Activated CD4-positive, alpha-beta T cell treated with anti-CD3 and anti-CD28 coated beads, Interleukin-2, amount 10 ng/mL, durations not matched to agents 24 days and 14 days (primary cell): ENCODE measurements at regions of chr2 and their contacts with region 1.

Region 1: GRCh38 chr2:197889041-197889440 is 84.6 kb downstream of the PLCL1 start:
- DNase-seq: peak; percentile 84
- H3K4me3 Mint-ChIP-seq: peak overlapping the region; percentile 64
- H3K27ac Mint-ChIP-seq: peak overlapping the region; percentile 76
- H3K4me1 Mint-ChIP-seq: peaks cover 41% of the 10 kb centered on the region
- H3K27me3 Mint-ChIP-seq: no peaks in the 10 kb centered on the region

Region 2: DNA sequence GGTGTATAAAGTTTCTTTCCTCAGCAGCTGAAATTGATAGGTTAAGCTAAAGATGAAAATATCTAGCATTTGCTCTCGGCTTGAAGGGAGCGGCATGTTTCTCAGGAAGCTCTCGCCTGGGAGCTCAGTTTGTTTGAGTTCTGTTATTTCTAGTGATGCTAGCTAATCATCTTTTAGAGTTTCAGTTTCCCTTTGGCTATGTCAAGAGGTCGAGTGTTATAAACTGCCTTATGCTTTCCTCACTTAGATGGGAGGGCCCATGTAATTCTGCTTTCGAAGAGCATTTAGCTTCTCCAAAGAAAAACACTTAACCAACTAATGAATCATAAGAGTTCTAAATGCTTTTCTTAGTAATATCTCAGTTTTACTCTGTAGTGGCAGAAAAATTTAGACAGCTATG is 51.0 kb before region 1 on chr2:
- intact Hi-C with region 1: loop called (anchors 1 kb)
- DNase-seq: peak; percentile 79
- H3K4me3 Mint-ChIP-seq: peak overlapping the region; percentile 64
- H3K27ac Mint-ChIP-seq: peak overlapping the region; percentile 70
- H3K4me1 Mint-ChIP-seq: peaks cover 26% of the 10 kb centered on the region
- H3K27me3 Mint-ChIP-seq: peaks cover 7% of the 10 kb centered on the region

Region 3: DNA sequence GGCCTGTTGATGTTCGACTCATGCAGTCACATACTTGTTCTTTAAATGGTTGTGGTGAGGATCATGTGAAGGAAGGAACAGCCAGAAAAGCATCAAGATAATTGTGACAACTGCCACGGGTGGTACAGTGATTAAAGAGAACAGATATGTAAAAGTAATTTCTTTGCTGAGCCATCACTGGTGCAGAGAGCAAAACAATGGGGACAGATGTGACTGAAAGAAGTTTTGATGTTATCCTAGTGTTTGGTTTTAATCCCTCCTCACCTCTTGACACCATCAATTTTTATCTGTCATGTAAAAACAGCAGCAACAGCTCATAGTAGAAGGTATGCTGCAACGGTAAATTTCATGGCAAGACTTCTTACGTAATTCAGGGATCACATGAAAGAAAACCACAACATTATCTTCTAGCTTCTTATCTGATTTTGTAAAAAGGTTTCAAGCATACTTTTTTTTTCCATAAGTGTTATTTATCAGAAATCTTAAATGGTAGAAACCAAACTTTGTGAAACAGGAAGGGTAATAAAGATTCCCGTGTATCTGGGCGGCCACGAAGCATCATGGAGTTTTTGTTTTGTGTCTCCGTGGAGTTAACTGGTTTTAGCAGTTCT is 19.4 kb before region 1 on chr2:
- intact Hi-C with region 1: loop called (anchors 1 kb)
- DNase-seq: peak; percentile 73
- H3K4me3 Mint-ChIP-seq: peak overlapping the region; percentile 75
- H3K27ac Mint-ChIP-seq: peak overlapping the region; percentile 84
- H3K4me1 Mint-ChIP-seq: peaks cover 38% of the 10 kb centered on the region
- H3K27me3 Mint-ChIP-seq: no peaks in the 10 kb centered on the region

Region 4: DNA sequence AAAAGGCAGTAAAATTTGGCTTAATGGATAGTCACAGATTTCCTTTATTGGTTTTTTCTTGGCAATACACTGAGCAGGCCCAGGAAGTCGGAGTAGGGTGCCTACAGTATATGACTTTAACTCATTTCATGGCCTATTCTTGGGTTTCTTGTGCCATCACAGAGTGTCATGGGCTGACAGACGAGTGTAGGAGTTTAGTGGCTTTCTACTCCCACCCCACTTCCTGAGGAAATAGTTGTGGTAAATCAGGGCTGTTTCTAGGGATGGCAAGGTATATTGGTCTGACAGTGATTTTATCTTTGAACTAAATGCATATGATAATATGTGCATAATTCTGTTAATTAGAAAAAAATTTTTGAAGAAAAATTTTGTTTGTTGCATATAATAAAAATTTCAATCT is 15.4 kb after region 1 on chr2:
- intact Hi-C with region 1: loop called (anchors 2 kb)
- DNase-seq: peak; percentile 73
- H3K4me3 Mint-ChIP-seq: no peak overlapping the region
- H3K27ac Mint-ChIP-seq: no peak overlapping the region
- H3K4me1 Mint-ChIP-seq: peaks cover 5% of the 10 kb centered on the region
- H3K27me3 Mint-ChIP-seq: peaks cover 63% of the 10 kb centered on the region

Region 5: GRCh38 chr2:197924483-197924882 is 35.4 kb after region 1 on chr2:
- intact Hi-C with region 1: no loop called
- DNase-seq: no peak
- H3K4me3 Mint-ChIP-seq: no peak overlapping the region
- H3K27ac Mint-ChIP-seq: no peak overlapping the region
- H3K4me1 Mint-ChIP-seq: peaks cover 1% of the 10 kb centered on the region
- H3K27me3 Mint-ChIP-seq: no peaks in the 10 kb centered on the region

Region 6: DNA sequence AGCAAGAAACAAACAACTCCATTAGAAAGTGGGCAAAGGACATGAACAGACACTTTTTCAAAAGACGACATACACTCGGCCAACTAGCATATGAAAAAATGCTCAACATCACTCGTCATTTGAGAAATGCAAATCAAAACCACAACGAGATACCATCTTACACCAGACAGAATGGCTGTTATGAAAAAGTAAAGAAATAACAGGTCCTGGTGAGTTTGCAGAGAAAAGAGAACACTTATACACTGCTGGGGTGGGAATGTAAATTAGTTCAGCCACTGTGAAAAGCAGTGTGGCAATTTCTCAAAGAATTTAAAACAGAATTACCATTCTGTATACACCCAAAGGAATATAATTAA is 45.9 kb after region 1 on chr2:
- intact Hi-C with region 1: loop called (anchors 2 kb)
- DNase-seq: peak; percentile 57
- H3K4me3 Mint-ChIP-seq: peak overlapping the region; percentile 15
- H3K27ac Mint-ChIP-seq: no peak overlapping the region
- H3K4me1 Mint-ChIP-seq: peaks cover 14% of the 10 kb centered on the region
- H3K27me3 Mint-ChIP-seq: peaks cover 3% of the 10 kb centered on the region

Region 7: GRCh38 chr2:198042189-198042588 is 153.1 kb after region 1 on chr2:
- intact Hi-C with region 1: loop called (anchors 2 kb)
- DNase-seq: no peak
- H3K4me3 Mint-ChIP-seq: no peak overlapping the region
- H3K27ac Mint-ChIP-seq: no peak overlapping the region
- H3K4me1 Mint-ChIP-seq: peaks cover 6% of the 10 kb centered on the region
- H3K27me3 Mint-ChIP-seq: no peaks in the 10 kb centered on the region

Region 8: DNA sequence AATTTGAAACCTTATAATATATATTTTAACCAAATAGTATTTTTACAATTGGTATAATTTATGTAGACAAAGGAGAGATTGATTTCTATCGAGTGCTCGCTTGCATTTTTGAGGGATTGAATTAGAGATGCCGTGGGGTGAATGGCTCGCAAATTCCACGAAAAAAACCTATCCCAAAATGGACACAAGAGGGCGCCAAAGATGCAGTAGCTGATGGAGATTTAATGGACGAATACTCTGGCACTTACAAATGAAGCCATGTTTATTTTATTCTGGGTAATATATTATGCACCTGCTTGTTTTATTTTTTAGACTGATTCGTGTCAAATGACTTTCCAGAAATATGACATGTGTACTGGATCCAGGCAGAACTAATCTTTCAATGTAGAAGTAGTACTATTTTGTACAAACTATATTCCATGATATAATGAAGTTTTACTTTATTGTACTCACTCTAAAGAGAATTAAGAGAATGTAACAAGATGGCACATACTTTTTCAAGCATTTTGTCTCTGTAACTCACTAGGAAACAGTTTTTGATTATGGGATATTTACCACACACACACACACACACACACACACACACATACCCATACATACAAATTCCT is 420.7 kb after region 1 on chr2:
- intact Hi-C with region 1: no loop called
- DNase-seq: peak; percentile 87
- H3K4me3 Mint-ChIP-seq: no peak overlapping the region
- H3K27ac Mint-ChIP-seq: no peak overlapping the region
- H3K4me1 Mint-ChIP-seq: no peaks in the 10 kb centered on the region
- H3K27me3 Mint-ChIP-seq: peaks cover 28% of the 10 kb centered on the region